WTC11 (cell line): ENCODE measurements at regions of chr19 and their contacts with region 1.

Region 1: DNA sequence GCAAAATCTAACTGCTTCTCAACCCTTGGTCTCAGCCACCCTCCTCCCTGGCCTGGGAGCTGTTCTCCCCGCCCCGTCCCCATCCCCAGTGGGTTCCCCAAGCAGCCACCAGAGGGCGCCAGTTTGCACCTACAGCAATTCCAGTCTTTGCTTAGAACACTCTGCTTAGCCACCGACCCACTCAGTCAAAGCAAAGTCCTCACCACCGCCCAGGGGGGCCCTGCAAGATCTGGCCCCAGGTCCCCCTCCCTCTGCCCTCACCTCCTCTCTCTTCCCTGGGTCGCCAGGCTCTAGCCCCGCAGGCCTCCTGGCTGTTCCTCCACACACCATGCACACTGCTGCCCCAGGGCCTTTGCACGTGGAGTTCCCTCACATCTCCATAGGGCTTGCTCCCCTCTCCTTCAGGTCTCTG is 12.4 kb downstream of the TMEM143 start:
- DNase-seq: peak; percentile 90
- ATAC-seq: peak; percentile 90
- H3K4me3 Mint-ChIP-seq: no peak overlapping the region
- H3K27ac Mint-ChIP-seq: no peak overlapping the region
- H3K4me1 Mint-ChIP-seq: peaks cover 7% of the 10 kb centered on the region; the same call in 1 of the 2 replicates
- H3K27me3 Mint-ChIP-seq: no peaks in the 10 kb centered on the region; the same call in 1 of the 2 replicates
- CTCF ChIP-seq: peak; percentile 90

Region 2: DNA sequence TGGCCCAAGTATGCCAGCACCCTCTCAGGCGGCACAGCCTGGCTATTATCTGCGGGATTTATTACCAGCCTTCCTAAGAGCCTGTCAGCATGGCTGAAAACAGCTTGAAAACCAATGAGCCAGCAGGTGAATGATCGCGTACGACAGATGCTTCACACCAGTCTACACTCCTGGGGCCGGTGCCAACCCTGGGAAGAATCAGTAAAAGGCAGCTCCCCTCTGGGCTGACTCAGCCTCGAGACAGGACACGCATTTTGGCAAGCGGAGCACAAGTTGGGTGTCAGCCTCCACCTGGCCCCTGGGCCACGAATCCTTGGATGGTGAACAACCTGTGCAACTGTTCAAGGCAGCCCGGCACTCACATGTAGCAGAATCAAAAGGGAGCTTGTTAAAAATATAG is 10.4 kb before region 1 on chr19:
- CTCF ChIA-PET with region 1: interaction called, 15 read pairs
- POLR2A ChIA-PET with region 1: no interaction called
- DNase-seq: no peak
- ATAC-seq: no peak
- H3K4me3 Mint-ChIP-seq: no peak overlapping the region
- H3K27ac Mint-ChIP-seq: no peak overlapping the region
- H3K4me1 Mint-ChIP-seq: no peaks in the 10 kb centered on the region
- H3K27me3 Mint-ChIP-seq: no peaks in the 10 kb centered on the region; the same call in 1 of the 2 replicates
- CTCF ChIP-seq: no peak

Region 3: GRCh38 chr19:48596679-48597465 is 245.5 kb after region 1 on chr19:
- CTCF ChIA-PET with region 1: no interaction called
- POLR2A ChIA-PET with region 1: interaction called, 11 read pairs
- DNase-seq: no peak
- ATAC-seq: no peak
- H3K4me3 Mint-ChIP-seq: no peak overlapping the region
- H3K27ac Mint-ChIP-seq: no peak overlapping the region
- H3K4me1 Mint-ChIP-seq: no peaks in the 10 kb centered on the region
- H3K27me3 Mint-ChIP-seq: no peaks in the 10 kb centered on the region; the same call in 1 of the 2 replicates
- CTCF ChIP-seq: no peak